ENCODE measurements at regions of chr11 and their contacts with region 1.

Region 1: GRCh38 chr11:23112987-23113886 is 253.0 kb upstream of the CCDC179 start:
- DNase-seq: peak; percentile 38 to 57
- H3K4me3 ChIP-seq: no peak overlapping the region
- H3K4me3 Mint-ChIP-seq: no peak overlapping the region
- H3K27ac Mint-ChIP-seq: no peak overlapping the region
- H3K4me1 ChIP-seq: no peaks in the 10 kb centered on the region
- H3K4me1 Mint-ChIP-seq: no peaks in the 10 kb centered on the region
- H3K27me3 ChIP-seq: no peaks in the 10 kb centered on the region
- H3K27me3 Mint-ChIP-seq: peaks cover 9% of the 10 kb centered on the region
- CTCF ChIP-seq: peak; percentile 51 to 58

Region 2: DNA sequence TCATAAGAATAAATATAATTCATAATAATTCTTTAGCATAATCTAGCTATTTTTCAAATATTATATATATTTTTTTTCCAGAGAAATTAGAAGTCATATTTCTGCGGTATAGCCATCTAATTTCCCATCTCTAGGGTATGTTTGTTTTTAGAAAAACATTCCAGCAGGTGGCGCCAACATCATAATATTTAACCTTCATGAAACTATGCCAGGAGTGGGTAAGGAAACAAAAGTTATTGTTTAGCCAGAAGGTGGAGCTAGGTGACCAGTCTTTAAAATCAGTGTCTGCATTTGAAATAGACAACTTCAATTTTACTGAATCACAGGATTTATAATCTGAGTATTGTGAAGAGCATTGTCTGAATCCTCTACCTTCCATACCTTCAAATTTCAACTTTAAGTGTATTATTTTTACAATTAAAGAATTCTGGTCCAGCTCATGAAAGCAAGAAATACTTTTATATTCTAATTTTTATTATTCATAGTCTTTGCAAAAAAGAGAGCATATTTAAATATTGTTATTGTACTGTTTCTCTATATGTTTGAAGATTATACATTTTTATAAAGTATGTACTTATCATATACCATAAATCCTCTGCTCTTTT is 237.3 kb before region 1 on chr11:
- CTCF ChIA-PET with region 1: interaction called, 5 read pairs
- POLR2A ChIA-PET with region 1: no interaction called
- intact Hi-C with region 1: loop called (anchors 1 kb)
- DNase-seq: peak; percentile 60 to 75
- H3K4me3 ChIP-seq: no peak overlapping the region
- H3K4me3 Mint-ChIP-seq: no peak overlapping the region
- H3K27ac Mint-ChIP-seq: no peak overlapping the region
- H3K4me1 ChIP-seq: no peaks in the 10 kb centered on the region
- H3K4me1 Mint-ChIP-seq: peaks cover 6% of the 10 kb centered on the region
- H3K27me3 ChIP-seq: no peaks in the 10 kb centered on the region
- H3K27me3 Mint-ChIP-seq: no peaks in the 10 kb centered on the region
- CTCF ChIP-seq: peak; percentile 62 to 83

Region 3: DNA sequence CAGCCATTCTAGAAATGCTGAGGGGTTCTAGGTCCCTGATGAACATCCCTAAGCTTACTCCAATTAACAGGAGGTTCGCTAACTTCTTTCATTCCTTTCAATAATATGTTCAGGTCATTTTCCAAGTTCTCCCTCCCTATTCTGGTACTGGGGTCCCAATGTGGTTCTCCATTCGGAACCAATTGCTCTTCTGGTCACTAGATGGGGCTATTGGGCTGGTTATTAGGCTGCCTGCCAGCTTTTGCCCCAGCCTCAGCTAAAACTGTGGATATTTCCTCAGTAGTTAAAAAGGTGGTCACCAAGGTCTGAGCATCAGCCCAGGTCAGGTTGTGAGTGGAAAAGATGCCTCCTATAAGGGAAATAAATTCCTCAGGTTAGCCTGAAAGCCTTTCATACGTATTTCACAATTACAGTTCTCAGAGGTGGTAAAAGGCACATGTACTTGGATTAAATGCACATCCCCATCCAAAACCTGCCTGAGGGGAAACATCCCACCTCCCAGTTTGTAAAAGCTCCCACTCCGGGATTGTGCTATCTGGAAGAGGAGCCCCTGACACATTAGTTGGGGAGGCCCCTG is 91.9 kb before region 1 on chr11:
- CTCF ChIA-PET with region 1: no interaction called
- POLR2A ChIA-PET with region 1: no interaction called
- intact Hi-C with region 1: loop called (anchors 1 kb)
- DNase-seq: peak in 1 of 2 experiments; percentile 42
- H3K4me3 ChIP-seq: no peak overlapping the region
- H3K4me3 Mint-ChIP-seq: no peak overlapping the region
- H3K27ac Mint-ChIP-seq: no peak overlapping the region
- H3K4me1 ChIP-seq: no peaks in the 10 kb centered on the region
- H3K4me1 Mint-ChIP-seq: no peaks in the 10 kb centered on the region
- H3K27me3 ChIP-seq: no peaks in the 10 kb centered on the region
- H3K27me3 Mint-ChIP-seq: no peaks in the 10 kb centered on the region
- CTCF ChIP-seq: peak; percentile 74 to 85

Region 4: GRCh38 chr11:23423104-23423503 is 309.9 kb after region 1 on chr11:
- CTCF ChIA-PET with region 1: no interaction called
- POLR2A ChIA-PET with region 1: no interaction called
- intact Hi-C with region 1: loop called (anchors 10 kb)
- DNase-seq: no peak
- H3K4me3 ChIP-seq: no peak overlapping the region
- H3K4me3 Mint-ChIP-seq: no peak overlapping the region
- H3K27ac Mint-ChIP-seq: no peak overlapping the region
- H3K4me1 ChIP-seq: no peaks in the 10 kb centered on the region
- H3K4me1 Mint-ChIP-seq: no peaks in the 10 kb centered on the region
- H3K27me3 ChIP-seq: no peaks in the 10 kb centered on the region
- H3K27me3 Mint-ChIP-seq: no peaks in the 10 kb centered on the region
- CTCF ChIP-seq: no peak

Region 5: DNA sequence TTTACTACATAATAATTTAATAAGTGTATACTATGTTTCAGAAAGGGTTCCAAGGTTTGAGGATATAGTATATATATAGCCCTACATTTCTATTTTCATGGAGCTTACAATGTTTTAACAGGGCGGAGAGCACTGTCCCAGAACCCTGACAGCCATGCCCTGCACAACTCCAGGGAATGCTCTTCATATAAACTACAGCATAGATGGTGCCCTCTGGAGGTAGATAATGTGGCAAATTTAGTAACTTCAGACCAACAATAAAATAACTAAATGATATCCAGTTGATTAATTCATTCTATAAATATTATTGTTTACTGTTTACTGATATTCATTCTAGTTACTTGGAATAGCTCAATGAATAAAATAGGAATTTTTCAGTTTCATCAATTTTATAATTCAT is 440.8 kb after region 1 on chr11:
- CTCF ChIA-PET with region 1: no interaction called
- POLR2A ChIA-PET with region 1: no interaction called
- intact Hi-C with region 1: loop called (anchors 1 kb)
- DNase-seq: no peak
- H3K4me3 ChIP-seq: no peak overlapping the region
- H3K4me3 Mint-ChIP-seq: no peak overlapping the region
- H3K27ac Mint-ChIP-seq: no peak overlapping the region
- H3K4me1 ChIP-seq: no peaks in the 10 kb centered on the region
- H3K4me1 Mint-ChIP-seq: no peaks in the 10 kb centered on the region
- H3K27me3 ChIP-seq: no peaks in the 10 kb centered on the region
- H3K27me3 Mint-ChIP-seq: no peaks in the 10 kb centered on the region
- CTCF ChIP-seq: peak; percentile 18 to 26

Region 6: DNA sequence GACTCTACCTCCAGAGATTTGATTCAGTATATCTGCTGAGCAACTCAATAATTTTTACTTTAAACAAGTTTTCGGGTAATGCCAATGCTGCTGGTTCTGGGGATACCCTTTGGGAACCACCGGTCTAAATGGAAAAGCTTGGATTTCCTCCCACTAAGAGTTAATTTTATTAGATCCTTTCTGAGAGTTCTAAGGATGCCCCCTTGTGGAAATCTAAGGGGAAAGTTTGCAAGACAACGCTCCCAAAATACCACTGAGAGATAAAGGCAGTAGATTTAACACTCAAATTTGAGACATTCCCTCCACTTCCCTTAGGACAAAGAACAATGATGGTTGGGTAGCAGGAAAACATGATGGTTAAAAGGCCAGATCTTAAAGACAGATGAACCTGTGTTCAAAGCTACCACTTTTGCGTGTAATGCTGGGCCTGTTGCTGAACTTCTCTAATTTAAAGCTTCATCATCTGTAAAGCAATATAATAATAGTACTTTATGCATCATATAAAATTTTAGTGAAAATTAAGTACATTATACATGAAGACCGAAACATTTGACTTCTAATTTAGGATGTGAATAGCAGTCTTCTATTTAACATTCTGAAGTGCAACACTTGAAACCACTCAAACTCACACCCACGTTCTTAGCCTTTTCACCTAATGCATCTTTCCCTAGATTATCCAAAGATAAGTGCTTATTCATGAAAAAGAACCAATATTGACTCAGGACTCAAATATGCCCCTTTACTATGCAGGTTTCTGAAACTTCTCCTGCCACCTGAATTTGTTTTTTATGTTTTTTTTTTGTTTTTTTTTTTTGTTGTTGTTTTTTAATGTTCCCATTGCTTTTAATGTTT is 1273.5 kb after region 1 on chr11:
- CTCF ChIA-PET with region 1: no interaction called
- POLR2A ChIA-PET with region 1: no interaction called
- intact Hi-C with region 1: loop called (anchors 1 kb)
- DNase-seq: peak in 1 of 2 experiments; percentile 17
- H3K4me3 ChIP-seq: no peak overlapping the region
- H3K4me3 Mint-ChIP-seq: no peak overlapping the region
- H3K27ac Mint-ChIP-seq: no peak overlapping the region
- H3K4me1 ChIP-seq: no peaks in the 10 kb centered on the region
- H3K4me1 Mint-ChIP-seq: no peaks in the 10 kb centered on the region
- H3K27me3 ChIP-seq: no peaks in the 10 kb centered on the region
- H3K27me3 Mint-ChIP-seq: peaks cover 2% of the 10 kb centered on the region
- CTCF ChIP-seq: peak; percentile 45 to 55